Left colon (tissue), 2 donors: ENCODE measurements at regions of chr2 and their contacts with region 1.

Region 1: GRCh38 chr2:202870431-202871299 is 901 bp downstream of the ICA1L start:
- DNase-seq: peak; percentile 59 to 64
- ATAC-seq: peak; percentile 73

Region 2: DNA sequence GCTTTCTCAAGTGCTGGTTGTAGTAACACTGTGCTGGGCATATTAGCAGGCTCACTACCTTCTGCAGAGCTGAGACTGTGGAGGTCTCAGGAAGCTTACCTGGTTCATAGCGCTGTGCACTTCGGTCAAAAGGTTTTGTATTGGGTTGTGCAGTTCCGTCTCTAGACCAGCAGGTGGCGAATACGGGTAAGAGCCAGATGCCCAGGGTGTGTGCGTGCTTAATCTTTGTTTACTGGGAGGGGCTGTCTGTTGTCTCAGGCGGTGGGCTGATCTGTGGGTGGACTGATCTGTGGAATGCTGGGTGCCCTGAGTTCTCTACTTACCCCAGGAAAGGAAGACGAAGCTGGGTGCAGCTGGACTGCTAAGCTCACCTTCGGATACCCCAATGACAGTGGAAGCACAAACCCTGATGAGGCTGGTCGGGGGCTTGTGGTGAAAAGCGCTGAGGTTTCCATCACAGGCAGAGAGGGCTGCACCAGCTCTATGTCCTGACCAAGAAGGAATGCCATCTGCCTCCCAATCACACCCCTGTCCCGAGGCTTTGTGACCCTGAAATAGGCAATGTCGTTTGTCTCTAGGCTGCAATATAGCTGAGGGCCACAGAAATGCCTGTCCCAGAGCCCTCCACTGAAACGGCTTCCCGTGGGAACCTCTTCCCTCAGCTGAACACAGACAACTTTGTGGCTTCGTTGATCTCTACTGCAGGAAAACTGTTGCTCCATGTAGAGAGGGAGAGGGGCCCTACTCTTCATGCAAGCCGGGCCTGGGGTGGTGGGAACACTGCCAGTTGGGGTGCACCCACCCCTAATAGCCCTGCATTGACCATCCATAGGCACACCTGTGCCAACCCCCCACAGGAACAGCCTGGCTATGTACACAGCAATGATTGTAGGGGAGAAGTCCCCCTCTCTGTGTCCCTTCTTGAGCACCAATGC is 281.8 kb before region 1 on chr2:
- intact Hi-C with region 1: loop called in 1 of 2 experiments (anchors 10 kb)
- DNase-seq: peak; percentile 68 to 77
- ATAC-seq: peak; percentile 90

Region 3: GRCh38 chr2:202624133-202624532 is 246.5 kb before region 1 on chr2:
- intact Hi-C with region 1: no loop called
- DNase-seq: no peak
- ATAC-seq: no peak

Region 4: DNA sequence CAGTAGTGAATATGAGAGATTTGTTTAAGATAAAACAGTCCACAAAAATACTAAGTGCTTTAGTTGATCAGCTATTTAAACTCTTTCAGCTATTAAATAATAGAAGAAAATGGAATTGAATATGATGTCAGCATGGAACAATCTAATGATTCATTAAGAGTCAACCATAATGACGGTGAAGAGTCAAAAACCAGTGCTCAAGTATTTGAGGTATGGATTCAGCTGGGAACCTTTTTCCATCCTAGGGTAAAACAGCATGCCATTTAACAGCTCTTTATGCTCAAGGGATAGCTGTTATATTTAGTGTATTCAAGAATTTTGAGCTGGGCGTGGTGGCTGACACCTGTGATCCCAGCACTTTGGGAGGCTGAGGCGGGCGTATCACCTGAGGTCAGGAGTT is 71.1 kb after region 1 on chr2:
- intact Hi-C with region 1: no loop called
- DNase-seq: no peak
- ATAC-seq: no peak

Region 5: GRCh38 chr2:203578759-203579643 is 708.3 kb after region 1 on chr2:
- intact Hi-C with region 1: no loop called
- DNase-seq: peak; percentile 67 to 85
- ATAC-seq: peak; percentile 91